ENCODE measurements at regions of chr11 and their contacts with region 1.

Region 1: GRCh38 chr11:61776551-61777075 is 15.8 kb downstream of the TMEM258 start:
- DNase-seq: peak; percentile 86
- ATAC-seq: peak; percentile 80
- H3K4me3 Mint-ChIP-seq: peak overlapping the region; percentile 23
- H3K27ac Mint-ChIP-seq: no peak overlapping the region
- H3K4me1 Mint-ChIP-seq: peaks cover 11% of the 10 kb centered on the region
- H3K27me3 Mint-ChIP-seq: peaks cover 5% of the 10 kb centered on the region

Region 2: DNA sequence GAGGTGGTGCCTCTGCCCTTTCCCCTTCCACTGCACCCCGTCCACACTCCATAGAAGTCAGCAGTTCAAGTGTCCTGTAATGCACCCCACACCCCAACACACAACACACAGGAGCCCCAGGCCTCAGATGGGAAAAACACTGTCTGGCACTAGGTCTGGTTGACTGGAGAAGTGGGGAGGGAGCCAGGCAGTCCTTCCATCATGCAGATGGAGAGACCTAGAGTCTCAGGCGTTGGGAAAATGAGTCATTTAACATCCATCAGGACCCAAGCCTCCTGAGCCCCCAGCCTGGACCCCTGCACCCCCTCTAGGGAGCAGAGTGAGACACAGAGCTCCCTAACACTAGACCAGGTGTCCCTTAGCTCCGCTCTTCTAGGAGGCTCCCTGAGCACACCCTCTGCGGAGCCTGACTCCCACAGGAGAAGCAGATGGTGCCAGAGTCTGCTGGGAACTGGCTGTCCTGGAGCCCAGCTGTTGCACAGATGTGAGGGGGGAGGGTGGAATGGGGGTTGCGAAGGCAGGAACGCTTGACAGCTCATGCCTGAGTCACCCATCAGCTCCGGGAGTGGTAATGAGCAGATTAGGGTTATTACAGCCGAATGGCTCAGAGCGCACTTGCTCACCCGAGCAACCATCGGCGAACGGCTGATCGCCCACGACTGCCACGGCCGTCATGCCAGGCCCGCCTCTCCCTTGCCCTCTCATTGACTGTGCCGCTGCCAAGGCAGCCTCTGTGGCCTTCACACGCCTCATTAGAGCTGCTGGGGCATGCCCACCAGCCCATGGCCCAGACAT is 173.6 kb before region 1 on chr11:
- CTCF ChIA-PET with region 1: no interaction called
- POLR2A ChIA-PET with region 1: no interaction called
- intact Hi-C with region 1: no loop called
- DNase-seq: no peak
- ATAC-seq: no peak
- H3K4me3 Mint-ChIP-seq: no peak overlapping the region
- H3K27ac Mint-ChIP-seq: no peak overlapping the region
- H3K4me1 Mint-ChIP-seq: no peaks in the 10 kb centered on the region
- H3K27me3 Mint-ChIP-seq: peaks cover 16% of the 10 kb centered on the region

Region 3: DNA sequence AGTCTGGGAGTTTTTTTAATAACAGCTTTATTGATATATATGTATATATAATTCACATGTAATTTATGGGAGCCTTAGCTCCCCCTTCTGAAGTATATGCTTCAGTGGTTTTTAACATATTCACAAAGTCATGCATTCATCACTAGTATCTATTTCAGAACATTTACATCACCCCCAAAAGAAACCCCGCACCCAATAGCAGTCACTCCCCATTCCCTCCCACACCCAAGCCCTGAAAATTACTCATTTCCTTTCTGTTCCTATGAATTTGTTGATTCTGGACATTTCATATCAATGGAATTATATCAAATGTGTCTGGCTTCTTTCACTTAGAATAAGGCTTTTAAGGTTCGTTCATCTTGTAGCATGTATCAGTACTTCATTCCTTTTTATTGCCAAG is 160.2 kb before region 1 on chr11:
- CTCF ChIA-PET with region 1: no interaction called
- POLR2A ChIA-PET with region 1: no interaction called
- intact Hi-C with region 1: no loop called
- DNase-seq: no peak
- ATAC-seq: no peak
- H3K4me3 Mint-ChIP-seq: no peak overlapping the region
- H3K27ac Mint-ChIP-seq: no peak overlapping the region
- H3K4me1 Mint-ChIP-seq: peaks cover 4% of the 10 kb centered on the region
- H3K27me3 Mint-ChIP-seq: peaks cover 15% of the 10 kb centered on the region

Region 4: DNA sequence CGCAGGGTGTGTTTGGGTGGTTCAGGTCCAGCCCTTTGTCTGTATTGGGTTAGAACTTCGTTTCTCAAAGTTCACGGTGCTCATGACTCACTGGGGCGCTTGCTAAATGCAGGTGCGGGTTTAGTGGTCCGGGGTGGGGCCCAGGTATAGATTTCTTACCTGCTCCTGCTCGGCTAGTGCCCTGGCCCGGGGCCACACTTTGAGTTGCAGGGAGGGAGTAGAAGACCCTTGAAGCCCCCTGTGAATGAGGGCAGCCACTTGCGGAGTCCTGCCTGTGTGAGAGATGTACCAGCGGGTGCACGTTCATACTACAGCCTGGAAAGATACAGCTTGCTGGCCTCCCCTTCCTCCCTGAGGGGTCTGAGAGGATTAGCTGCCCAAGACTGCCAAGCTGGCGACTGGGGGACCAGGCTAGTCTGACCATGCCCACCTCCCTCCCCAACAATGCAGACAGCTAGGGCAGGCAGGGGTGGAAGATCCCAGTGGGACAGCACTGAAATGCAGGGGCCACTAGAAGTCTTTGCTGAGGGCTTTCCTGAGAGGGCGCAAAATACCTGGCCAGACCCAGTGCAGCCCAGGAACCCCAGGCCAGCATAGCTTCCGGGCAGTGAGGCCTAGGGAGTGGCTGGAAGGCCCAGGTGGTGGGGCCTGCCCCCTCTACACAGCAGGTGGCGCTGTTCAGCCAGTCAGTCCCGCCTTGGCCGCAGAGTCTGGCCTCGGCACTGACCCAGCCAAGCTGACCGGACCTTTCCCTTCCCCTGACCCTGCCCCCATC is 29.2 kb before region 1 on chr11:
- CTCF ChIA-PET with region 1: interaction called, 3 read pairs
- POLR2A ChIA-PET with region 1: no interaction called
- intact Hi-C with region 1: loop called (anchors 1 kb)
- DNase-seq: peak; percentile 75
- ATAC-seq: peak; percentile 63
- H3K4me3 Mint-ChIP-seq: no peak overlapping the region
- H3K27ac Mint-ChIP-seq: no peak overlapping the region
- H3K4me1 Mint-ChIP-seq: peaks cover 2% of the 10 kb centered on the region
- H3K27me3 Mint-ChIP-seq: peaks cover 17% of the 10 kb centered on the region

Region 5: DNA sequence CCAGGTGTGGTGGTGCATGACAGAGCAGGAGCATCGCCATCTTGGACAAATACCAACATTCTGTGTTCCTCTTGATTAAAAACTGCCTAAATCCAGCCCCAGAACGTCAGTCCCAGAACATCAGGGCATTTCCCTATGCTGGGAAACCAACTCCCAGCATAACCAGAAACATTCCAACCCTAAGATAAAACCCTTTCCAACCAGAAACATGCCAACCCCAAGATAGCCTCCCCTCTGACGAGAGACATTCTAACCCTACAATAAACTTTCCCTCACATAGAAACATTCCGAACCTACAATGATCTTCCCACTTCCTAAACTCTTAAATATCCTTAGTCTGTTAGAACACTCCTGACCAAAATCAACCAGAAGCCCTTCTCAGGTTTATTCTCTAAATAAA is 1771.6 kb after region 1 on chr11:
- CTCF ChIA-PET with region 1: no interaction called
- POLR2A ChIA-PET with region 1: no interaction called
- intact Hi-C with region 1: no loop called
- DNase-seq: no peak
- ATAC-seq: no peak
- H3K4me3 Mint-ChIP-seq: no peak overlapping the region
- H3K27ac Mint-ChIP-seq: no peak overlapping the region
- H3K4me1 Mint-ChIP-seq: peaks cover 26% of the 10 kb centered on the region
- H3K27me3 Mint-ChIP-seq: no peaks in the 10 kb centered on the region